Posterior vena cava (tissue), 2 donors: ENCODE measurements at regions of chr14 and their contacts with region 1.

Region 1: DNA sequence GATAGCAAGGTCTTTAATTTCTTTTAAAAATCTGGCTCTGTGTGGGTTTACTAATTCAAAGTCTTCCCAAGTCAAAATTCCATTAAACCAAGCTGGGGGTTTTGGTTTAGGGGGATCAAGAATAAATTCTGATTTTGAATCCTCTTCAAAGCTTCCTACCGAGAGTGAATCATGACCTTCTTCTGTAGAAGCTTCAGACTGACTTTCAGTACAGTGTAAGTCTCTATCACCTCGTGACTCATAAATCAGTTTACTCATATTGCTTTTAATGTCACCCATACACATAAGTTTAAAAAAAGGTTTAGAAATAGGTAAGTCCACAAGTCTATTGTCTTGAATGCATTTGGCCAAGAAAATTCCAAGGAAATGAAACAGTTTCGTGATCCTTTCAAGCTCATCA is 80.6 kb upstream of the STRN3 start:
- DNase-seq: no peak

Region 2: DNA sequence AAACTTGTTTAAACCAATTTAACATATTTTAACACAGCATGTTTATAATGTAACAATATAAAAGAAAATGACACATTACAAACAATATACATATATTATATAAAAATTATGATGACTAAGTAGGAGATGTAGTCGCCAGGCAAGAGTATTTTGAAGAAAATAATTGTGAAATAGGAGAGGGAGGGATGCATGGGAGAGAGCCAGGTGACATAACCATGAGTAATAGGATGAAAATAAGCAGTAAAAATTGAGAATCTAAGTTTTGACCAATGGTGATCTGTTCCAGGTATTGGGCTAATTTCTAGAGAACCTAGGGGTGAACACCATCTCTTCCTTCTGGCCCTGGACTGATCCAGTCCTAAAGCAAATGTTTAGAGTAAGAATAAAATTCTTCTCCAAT is 863.0 kb before region 1 on chr14:
- intact Hi-C with region 1: loop called in 1 of 2 experiments (anchors 10 kb)
- DNase-seq: no peak